B cell (primary cell): ENCODE measurements at regions of chr2 and their contacts with region 1.

Region 1: DNA sequence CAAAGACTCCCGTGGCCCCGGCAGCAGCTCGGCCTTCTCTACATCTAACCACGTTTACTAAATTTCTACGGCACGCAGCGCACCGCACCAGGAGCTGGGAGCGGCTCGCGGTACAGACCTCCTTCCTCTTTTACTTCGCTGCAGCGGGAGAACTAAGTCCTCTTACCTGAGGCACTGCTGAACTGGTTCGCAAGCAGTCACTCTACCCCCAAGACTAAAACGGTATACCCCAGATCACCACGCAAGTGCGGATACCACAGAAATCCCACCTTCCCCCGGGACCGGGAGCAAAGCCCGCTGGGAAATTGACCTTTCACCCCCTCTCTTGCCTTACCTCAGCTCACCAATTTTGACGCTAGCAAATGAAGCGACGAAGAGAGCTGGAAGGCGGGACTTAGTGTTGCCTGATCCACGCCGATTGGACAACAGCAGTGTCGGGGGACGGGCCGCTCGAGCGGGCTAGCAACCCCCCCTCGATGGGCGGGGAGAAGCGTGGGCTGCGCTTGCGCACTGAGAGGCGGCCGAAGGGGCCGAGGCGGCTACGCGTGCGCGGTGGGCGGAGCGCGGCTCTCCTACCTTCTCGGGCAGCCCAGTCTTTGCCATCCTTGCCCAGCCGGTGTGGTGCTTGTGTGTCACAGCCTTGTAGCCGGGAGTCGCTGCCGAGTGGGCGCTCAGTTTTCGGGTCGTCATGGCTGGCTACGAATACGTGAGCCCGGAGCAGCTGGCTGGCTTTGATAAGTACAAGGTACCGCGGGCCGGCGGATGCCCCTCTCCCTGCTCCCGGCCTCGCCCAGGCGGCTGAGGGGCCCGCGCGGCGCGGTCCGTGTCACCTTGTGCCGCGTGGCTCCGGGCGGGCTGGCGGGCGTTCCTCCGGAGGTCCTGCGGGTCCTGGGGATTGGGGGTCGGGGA is at the start of gene SELENOI:
- DNase-seq: peak; percentile 100
- ATAC-seq: peak; percentile 96
- H3K4me3 ChIP-seq: peak within 1 kb of the TSS; percentile 64 to 95 (median 86)
- H3K4me3 Mint-ChIP-seq: peak within 1 kb of the TSS; percentile 100
- H3K27ac ChIP-seq: peak within 1 kb of the TSS; percentile 83 to 92
- H3K27ac Mint-ChIP-seq: peak within 1 kb of the TSS; percentile 99
- H3K4me1 ChIP-seq: peaks cover 18 to 20% of the 10 kb centered on the region in 2 donors
- H3K4me1 Mint-ChIP-seq: peaks cover 35% of the 10 kb centered on the region
- H3K27me3 ChIP-seq: no peaks in the 10 kb centered on the region
- H3K27me3 Mint-ChIP-seq: no peaks in the 10 kb centered on the region
- CTCF ChIP-seq: no peak
- total RNA-seq, gene SELENOI: 20.0 and 20.1 TPM in 2 replicates

Region 2: DNA sequence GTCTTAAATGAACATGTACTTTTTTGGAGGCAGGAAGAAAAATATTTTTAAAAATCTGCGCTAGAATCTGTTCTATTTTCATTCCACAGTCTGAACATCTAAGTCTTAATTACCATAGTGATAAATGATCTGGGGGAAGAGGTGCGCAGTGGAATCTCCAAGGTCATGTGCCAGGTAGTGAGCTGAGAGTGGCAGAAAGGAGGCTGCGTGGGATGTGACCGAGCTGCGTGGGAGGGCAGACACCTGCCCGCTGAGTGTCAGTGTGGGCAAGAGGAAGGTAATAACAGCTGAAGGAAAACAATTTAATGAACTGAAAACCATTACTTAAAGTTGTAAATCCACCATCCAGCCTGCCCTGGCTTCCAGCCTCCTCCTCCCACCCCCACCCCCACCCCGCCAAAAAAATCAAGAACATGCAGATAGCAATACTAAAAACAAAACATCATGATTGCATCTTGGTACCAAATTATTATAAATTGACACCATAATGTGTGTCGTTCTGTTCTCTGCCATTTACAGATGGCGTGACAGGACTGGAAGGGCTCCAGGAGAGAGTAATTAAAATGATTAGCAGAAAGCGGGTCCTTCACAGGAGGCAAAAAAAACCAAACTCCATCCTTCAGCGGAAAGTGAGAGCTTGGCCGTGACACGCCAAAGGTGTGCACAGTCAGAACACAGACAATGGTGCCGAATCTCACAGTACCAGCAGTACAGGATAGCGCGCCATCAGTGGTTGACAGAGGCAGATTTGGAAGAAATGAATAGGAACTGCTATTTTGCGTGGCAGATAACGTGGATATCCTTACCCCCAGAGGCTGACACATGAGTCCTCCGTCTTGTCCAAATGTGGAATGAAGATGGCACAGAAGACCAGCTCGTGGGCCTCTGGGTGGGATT is 661.0 kb before region 1 on chr2:
- CTCF ChIA-PET with region 1: no interaction called
- POLR2A ChIA-PET with region 1: interaction called, 10 read pairs
- intact Hi-C with region 1: no loop called
- DNase-seq: no peak
- ATAC-seq: no peak
- H3K4me3 ChIP-seq: no peak overlapping the region
- H3K4me3 Mint-ChIP-seq: no peak overlapping the region
- H3K27ac ChIP-seq: no peak overlapping the region
- H3K27ac Mint-ChIP-seq: no peak overlapping the region
- H3K4me1 ChIP-seq: no peaks in the 10 kb centered on the region
- H3K4me1 Mint-ChIP-seq: peaks cover 2% of the 10 kb centered on the region
- H3K27me3 ChIP-seq: no peaks in the 10 kb centered on the region
- H3K27me3 Mint-ChIP-seq: peaks cover 7% of the 10 kb centered on the region
- CTCF ChIP-seq: no peak

Region 3: GRCh38 chr2:25936889-25937545 is 408.8 kb before region 1 on chr2:
- CTCF ChIA-PET with region 1: no interaction called
- POLR2A ChIA-PET with region 1: no interaction called
- intact Hi-C with region 1: no loop called
- DNase-seq: no peak
- ATAC-seq: no peak
- H3K4me3 ChIP-seq: no peak overlapping the region
- H3K4me3 Mint-ChIP-seq: no peak overlapping the region
- H3K27ac ChIP-seq: no peak overlapping the region
- H3K27ac Mint-ChIP-seq: no peak overlapping the region
- H3K4me1 ChIP-seq: no peaks in the 10 kb centered on the region
- H3K4me1 Mint-ChIP-seq: no peaks in the 10 kb centered on the region
- H3K27me3 ChIP-seq: no peaks in the 10 kb centered on the region
- H3K27me3 Mint-ChIP-seq: no peaks in the 10 kb centered on the region
- CTCF ChIP-seq: no peak

Region 4: DNA sequence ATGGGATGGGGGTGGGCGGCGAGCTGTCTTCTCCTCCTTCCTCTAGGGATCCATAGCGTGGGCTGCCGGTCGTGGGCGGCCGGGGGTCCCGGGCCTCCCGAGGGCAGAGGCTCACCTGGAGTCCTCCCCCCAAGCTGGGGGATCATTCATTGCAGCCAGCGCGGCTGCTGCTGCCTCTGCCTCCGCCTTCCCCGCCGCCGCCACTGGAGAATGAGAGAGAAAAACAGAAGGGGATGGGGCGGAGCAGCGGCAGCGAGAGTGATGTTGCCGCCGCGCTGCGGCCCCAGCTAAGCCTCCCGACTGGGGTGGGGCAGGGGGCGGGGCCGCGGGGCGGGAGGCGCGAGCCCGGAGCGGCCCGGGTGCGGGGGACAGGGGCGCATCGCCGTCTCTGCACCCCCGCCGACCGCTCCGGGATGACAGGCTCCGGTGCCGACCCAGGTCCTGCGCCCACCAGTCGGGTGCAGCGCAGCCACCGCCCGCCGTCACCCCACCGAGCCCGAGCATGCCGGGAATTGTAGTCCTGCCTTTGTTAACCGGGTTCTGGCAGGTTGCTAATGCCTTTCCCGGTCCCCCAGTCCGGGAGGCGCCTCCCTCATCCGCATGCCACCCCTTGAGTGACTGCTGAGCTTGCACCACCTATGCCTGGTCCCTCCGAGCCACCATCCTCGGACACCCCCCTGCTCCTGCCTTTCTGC is 363.4 kb before region 1 on chr2 and contains the start of gene KIF3C:
- CTCF ChIA-PET with region 1: no interaction called
- POLR2A ChIA-PET with region 1: no interaction called
- intact Hi-C with region 1: loop called (anchors 5 kb)
- DNase-seq: peak; percentile 76
- ATAC-seq: peak; percentile 87
- H3K4me3 ChIP-seq: peak within 1 kb of the TSS; percentile 36 to 81 (median 70)
- H3K4me3 Mint-ChIP-seq: peak within 1 kb of the TSS; percentile 88
- H3K27ac ChIP-seq: peak within 1 kb of the TSS in 1 of 2 donors; percentile 53
- H3K27ac Mint-ChIP-seq: peak within 1 kb of the TSS; percentile 61
- H3K4me1 ChIP-seq: peaks cover 6 to 14% of the 10 kb centered on the region in 2 donors
- H3K4me1 Mint-ChIP-seq: peaks cover 8% of the 10 kb centered on the region
- H3K27me3 ChIP-seq: peaks cover 0 to 3% (median 0%) of the 10 kb centered on the region in 4 experiments
- H3K27me3 Mint-ChIP-seq: no peaks in the 10 kb centered on the region
- CTCF ChIP-seq: no peak
- total RNA-seq, gene KIF3C: 4.0 and 6.9 TPM in 2 replicates

Region 5: GRCh38 chr2:26244309-26245121 is 101.3 kb before region 1 on chr2 and contains the starts of genes HADHA and HADHB:
- CTCF ChIA-PET with region 1: no interaction called
- POLR2A ChIA-PET with region 1: interaction called, 9 read pairs
- intact Hi-C with region 1: loop called (anchors 1 kb)
- DNase-seq: peak; percentile 96
- ATAC-seq: peak; percentile 85
- H3K4me3 ChIP-seq: peak within 1 kb of the TSS; percentile 68 to 100 (median 92)
- H3K4me3 Mint-ChIP-seq: peak within 1 kb of the TSS; percentile 100
- H3K27ac ChIP-seq: peak within 1 kb of the TSS; percentile 93 to 99
- H3K27ac Mint-ChIP-seq: peak within 1 kb of the TSS; percentile 100
- H3K4me1 ChIP-seq: peaks cover 32 to 43% of the 10 kb centered on the region in 2 donors
- H3K4me1 Mint-ChIP-seq: peaks cover 62% of the 10 kb centered on the region
- H3K27me3 ChIP-seq: no peaks in the 10 kb centered on the region
- H3K27me3 Mint-ChIP-seq: no peaks in the 10 kb centered on the region
- CTCF ChIP-seq: no peak
- total RNA-seq, gene HADHA: 96.7 and 104 TPM in 2 replicates
- total RNA-seq, gene HADHB: 64.2 and 70.3 TPM in 2 replicates

Region 6: DNA sequence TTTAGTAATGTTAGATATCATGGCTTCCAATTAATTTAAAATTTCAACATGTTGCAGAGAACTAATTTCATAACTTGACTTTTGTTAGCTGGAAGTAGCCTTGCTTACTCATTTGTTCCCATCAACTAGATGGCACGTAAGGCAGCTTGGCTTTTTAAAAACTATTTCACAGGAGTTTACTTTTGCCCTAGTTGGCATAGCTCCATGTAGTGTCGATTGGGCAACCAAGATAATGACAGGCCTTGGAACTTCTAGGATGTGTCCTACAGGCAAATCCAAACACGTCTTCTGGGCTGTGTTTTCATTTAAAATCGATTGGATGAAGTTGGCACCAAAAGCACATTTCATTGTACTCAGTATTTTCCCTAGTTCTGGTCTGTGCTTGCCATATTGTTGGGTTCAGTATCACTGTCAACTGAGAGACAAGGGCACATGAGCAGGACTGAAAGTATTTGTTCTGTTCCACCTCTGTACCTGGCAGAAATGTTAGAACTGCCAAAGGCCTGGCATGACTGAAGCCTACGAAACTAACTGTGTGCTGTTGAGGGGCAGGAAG is 71.7 kb before region 1 on chr2:
- CTCF ChIA-PET with region 1: no interaction called
- POLR2A ChIA-PET with region 1: no interaction called
- intact Hi-C with region 1: no loop called
- DNase-seq: no peak
- ATAC-seq: no peak
- H3K4me3 ChIP-seq: no peak overlapping the region
- H3K4me3 Mint-ChIP-seq: no peak overlapping the region
- H3K27ac ChIP-seq: no peak overlapping the region
- H3K27ac Mint-ChIP-seq: no peak overlapping the region
- H3K4me1 ChIP-seq: peaks cover 0 to 10% of the 10 kb centered on the region in 2 donors
- H3K4me1 Mint-ChIP-seq: peaks cover 15% of the 10 kb centered on the region
- H3K27me3 ChIP-seq: no peaks in the 10 kb centered on the region
- H3K27me3 Mint-ChIP-seq: no peaks in the 10 kb centered on the region
- CTCF ChIP-seq: no peak

Region 7: DNA sequence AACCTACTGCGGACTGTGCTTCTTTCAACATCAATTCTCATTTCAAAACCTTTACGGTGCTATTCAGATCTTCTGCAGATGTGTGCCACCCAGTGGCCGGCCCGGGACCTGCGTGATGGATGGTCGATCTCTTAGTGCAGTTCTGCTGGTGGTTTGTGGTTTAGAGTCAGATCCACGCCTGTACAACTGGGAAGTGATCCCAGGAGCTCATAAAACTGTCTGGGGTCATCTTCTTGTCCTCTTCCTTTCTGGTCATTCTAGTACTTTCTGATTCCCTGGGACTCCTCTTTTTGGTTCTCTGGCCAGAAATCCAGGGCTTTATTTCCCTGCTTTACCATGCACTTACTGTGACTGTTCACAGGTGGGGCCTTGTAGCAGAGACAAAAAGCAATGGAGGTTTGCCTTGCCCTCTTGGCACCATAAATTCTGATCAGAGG is 15.7 kb before region 1 on chr2:
- CTCF ChIA-PET with region 1: interaction called, 12 read pairs
- POLR2A ChIA-PET with region 1: no interaction called
- intact Hi-C with region 1: loop called (anchors 1 kb)
- DNase-seq: peak; percentile 79
- ATAC-seq: peak; percentile 95
- H3K4me3 ChIP-seq: no peak overlapping the region
- H3K4me3 Mint-ChIP-seq: no peak overlapping the region
- H3K27ac ChIP-seq: no peak overlapping the region
- H3K27ac Mint-ChIP-seq: no peak overlapping the region
- H3K4me1 ChIP-seq: peaks cover 2 to 5% of the 10 kb centered on the region in 2 donors
- H3K4me1 Mint-ChIP-seq: peaks cover 6% of the 10 kb centered on the region
- H3K27me3 ChIP-seq: no peaks in the 10 kb centered on the region
- H3K27me3 Mint-ChIP-seq: no peaks in the 10 kb centered on the region
- CTCF ChIP-seq: peak; percentile 97

Region 8: GRCh38 chr2:26356771-26357170 is 11.0 kb after region 1 on chr2:
- CTCF ChIA-PET with region 1: no interaction called
- POLR2A ChIA-PET with region 1: no interaction called
- intact Hi-C with region 1: no loop called
- DNase-seq: no peak
- ATAC-seq: no peak
- H3K4me3 ChIP-seq: no peak overlapping the region
- H3K4me3 Mint-ChIP-seq: no peak overlapping the region
- H3K27ac ChIP-seq: no peak overlapping the region
- H3K27ac Mint-ChIP-seq: no peak overlapping the region
- H3K4me1 ChIP-seq: no peaks in the 10 kb centered on the region
- H3K4me1 Mint-ChIP-seq: peaks cover 14% of the 10 kb centered on the region
- H3K27me3 ChIP-seq: no peaks in the 10 kb centered on the region
- H3K27me3 Mint-ChIP-seq: no peaks in the 10 kb centered on the region
- CTCF ChIP-seq: no peak